Naive thymus-derived CD4-positive, alpha-beta T cell (primary cell): ENCODE measurements at regions of chr2 and their contacts with region 1.

Region 1: DNA sequence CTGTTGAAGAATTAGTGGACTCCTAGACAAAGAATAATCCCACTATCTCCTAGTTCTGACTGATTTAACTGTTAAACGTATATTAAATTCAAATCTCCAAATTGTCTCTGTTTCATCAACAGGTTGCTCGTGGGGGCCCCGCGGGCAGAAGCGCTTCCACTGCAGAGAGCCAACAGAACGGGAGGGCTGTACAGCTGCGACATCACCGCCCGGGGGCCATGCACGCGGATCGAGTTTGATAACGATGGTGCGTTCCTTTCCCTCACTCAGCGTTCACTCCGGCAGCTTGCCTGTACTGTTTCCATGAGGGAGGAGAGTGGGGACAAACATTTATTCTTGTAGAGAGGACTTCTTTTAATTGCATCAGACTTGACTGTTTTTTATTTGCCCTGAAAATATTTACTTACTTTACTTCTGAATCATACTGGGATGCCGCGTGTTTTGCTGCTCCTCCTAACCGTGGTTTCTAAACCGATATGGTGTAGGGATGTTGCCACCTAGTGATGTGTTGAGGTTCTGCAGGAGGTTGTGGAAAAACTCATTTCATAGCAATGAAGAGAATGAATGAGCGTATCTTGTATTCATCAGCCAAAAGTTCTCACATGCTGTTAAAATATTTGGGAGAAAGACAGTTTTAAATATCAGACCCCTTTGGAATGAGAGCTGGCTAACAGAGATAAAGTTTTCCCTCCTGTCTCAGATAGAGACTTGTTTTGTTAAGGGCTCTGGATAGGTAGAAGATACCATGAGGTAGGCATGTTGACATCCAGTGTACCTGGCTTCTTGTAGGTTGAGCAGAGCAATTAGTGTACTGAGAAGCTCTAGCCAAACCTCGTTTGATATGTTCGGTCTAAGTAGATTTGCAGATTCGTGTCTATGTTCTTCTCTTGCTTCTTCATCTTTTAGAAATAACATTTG is 38.3 kb downstream of the ITGA6 start:
- DNase-seq: peak in 8 of 9 donors; percentile 58 to 83 (median 76)
- ATAC-seq: peak; percentile 65
- H3K4me3 ChIP-seq: peak overlapping the region; percentile 68
- H3K4me3 Mint-ChIP-seq: peak overlapping the region; percentile 21 to 93 (median 84)
- H3K27ac ChIP-seq: peak overlapping the region; percentile 69
- H3K27ac Mint-ChIP-seq: peak overlapping the region; percentile 34 to 98 (median 91)
- H3K4me1 ChIP-seq: peaks cover 50 to 54% of the 10 kb centered on the region in 2 donors
- H3K4me1 Mint-ChIP-seq: peaks cover 54 to 97% (median 84%) of the 10 kb centered on the region in 7 donors
- H3K27me3 ChIP-seq: no peaks in the 10 kb centered on the region
- H3K27me3 Mint-ChIP-seq: peaks cover 0 to 2% (median 0%) of the 10 kb centered on the region in 5 donors

Region 2: DNA sequence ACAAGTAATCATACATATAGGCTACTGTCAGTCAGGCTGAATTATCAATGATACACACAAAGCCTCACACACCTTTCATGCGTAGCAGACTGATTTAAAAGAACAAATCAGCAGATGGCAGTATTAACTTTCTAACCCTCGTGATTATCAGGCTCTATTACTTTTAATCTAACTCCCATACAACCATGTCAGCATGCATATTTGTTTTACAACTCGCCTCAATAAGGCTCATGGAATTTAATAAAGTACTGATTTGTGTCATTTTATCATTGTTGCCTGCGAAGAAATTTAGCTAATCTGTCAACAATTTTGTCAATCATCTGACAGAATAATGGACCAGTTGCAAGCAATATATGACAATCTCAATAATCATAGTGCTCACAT is 654.4 kb before region 1 on chr2:
- CTCF ChIA-PET with region 1: interaction called, 3 read pairs
- POLR2A ChIA-PET with region 1: no interaction called
- intact Hi-C with region 1: loop called (anchors 1 kb)
- DNase-seq: peak in 4 of 9 donors; percentile 3 to 28 (median 14)
- ATAC-seq: no peak
- H3K4me3 ChIP-seq: no peak overlapping the region
- H3K4me3 Mint-ChIP-seq: no peak overlapping the region
- H3K27ac ChIP-seq: no peak overlapping the region
- H3K27ac Mint-ChIP-seq: no peak overlapping the region
- H3K4me1 ChIP-seq: no peaks in the 10 kb centered on the region
- H3K4me1 Mint-ChIP-seq: no peaks in the 10 kb centered on the region
- H3K27me3 ChIP-seq: no peaks in the 10 kb centered on the region
- H3K27me3 Mint-ChIP-seq: no peaks in the 10 kb centered on the region

Region 3: GRCh38 chr2:172102391-172103278 is 363.0 kb before region 1 on chr2 and contains the start of gene DLX2:
- CTCF ChIA-PET with region 1: no interaction called
- POLR2A ChIA-PET with region 1: interaction called, 3 read pairs
- intact Hi-C with region 1: loop called (anchors 2 to 5 kb)
- DNase-seq: peak in 5 of 9 donors; percentile 23 to 43 (median 32)
- ATAC-seq: peak; percentile 61
- H3K4me3 ChIP-seq: peak within 1 kb of the TSS; percentile 32
- H3K4me3 Mint-ChIP-seq: peak within 1 kb of the TSS; percentile 74 to 88 (median 82)
- H3K27ac ChIP-seq: no peak within 1 kb of the TSS
- H3K27ac Mint-ChIP-seq: peak within 1 kb of the TSS in 8 of 9 donors; percentile 11 to 89 (median 80)
- H3K4me1 ChIP-seq: peaks cover 41 to 62% of the 10 kb centered on the region in 2 donors
- H3K4me1 Mint-ChIP-seq: peaks cover 29 to 59% (median 49%) of the 10 kb centered on the region in 7 donors
- H3K27me3 ChIP-seq: peaks cover 48 to 83% of the 10 kb centered on the region in 2 donors
- H3K27me3 Mint-ChIP-seq: peaks cover 65 to 91% (median 70%) of the 10 kb centered on the region in 5 donors
- total RNA-seq, gene DLX2: 0.16 to 0.34 TPM in 2 of 5 experiments, not detected in the others

Region 4: GRCh38 chr2:172226244-172227061 is 239.2 kb before region 1 on chr2:
- CTCF ChIA-PET with region 1: interaction called, 30 read pairs
- POLR2A ChIA-PET with region 1: interaction called, 3 read pairs
- intact Hi-C with region 1: loop called (anchors 1 to 2 kb)
- DNase-seq: peak in 7 of 9 donors; percentile 32 to 51 (median 37)
- ATAC-seq: peak; percentile 78
- H3K4me3 ChIP-seq: no peak overlapping the region
- H3K4me3 Mint-ChIP-seq: no peak overlapping the region
- H3K27ac ChIP-seq: no peak overlapping the region
- H3K27ac Mint-ChIP-seq: peak overlapping the region in 4 of 9 donors; percentile 2 to 44 (median 36)
- H3K4me1 ChIP-seq: peaks cover 0 to 45% of the 10 kb centered on the region in 2 donors
- H3K4me1 Mint-ChIP-seq: peaks cover 42 to 71% (median 64%) of the 10 kb centered on the region in 7 donors
- H3K27me3 ChIP-seq: no peaks in the 10 kb centered on the region
- H3K27me3 Mint-ChIP-seq: peaks cover 0 to 6% (median 0%) of the 10 kb centered on the region in 5 donors

Region 5: GRCh38 chr2:172442072-172442895 is 23.4 kb before region 1 on chr2:
- CTCF ChIA-PET with region 1: interaction called, 673 read pairs
- POLR2A ChIA-PET with region 1: interaction called, 862 read pairs
- intact Hi-C with region 1: loop called in 1 of 2 experiments (anchors 1 kb)
- DNase-seq: peak in 3 of 9 donors; percentile 42 to 63 (median 46)
- ATAC-seq: peak; percentile 47
- H3K4me3 ChIP-seq: peak overlapping the region; percentile 46
- H3K4me3 Mint-ChIP-seq: peak overlapping the region in 9 of 10 donors; percentile 59 to 95 (median 91)
- H3K27ac ChIP-seq: peak overlapping the region; percentile 41
- H3K27ac Mint-ChIP-seq: peak overlapping the region in 8 of 9 donors; percentile 37 to 97 (median 90)
- H3K4me1 ChIP-seq: peaks cover 59 to 80% of the 10 kb centered on the region in 2 donors
- H3K4me1 Mint-ChIP-seq: peaks cover 33 to 79% (median 72%) of the 10 kb centered on the region in 7 donors
- H3K27me3 ChIP-seq: no peaks in the 10 kb centered on the region
- H3K27me3 Mint-ChIP-seq: peaks cover 0 to 31% (median 0%) of the 10 kb centered on the region in 5 donors

Region 6: DNA sequence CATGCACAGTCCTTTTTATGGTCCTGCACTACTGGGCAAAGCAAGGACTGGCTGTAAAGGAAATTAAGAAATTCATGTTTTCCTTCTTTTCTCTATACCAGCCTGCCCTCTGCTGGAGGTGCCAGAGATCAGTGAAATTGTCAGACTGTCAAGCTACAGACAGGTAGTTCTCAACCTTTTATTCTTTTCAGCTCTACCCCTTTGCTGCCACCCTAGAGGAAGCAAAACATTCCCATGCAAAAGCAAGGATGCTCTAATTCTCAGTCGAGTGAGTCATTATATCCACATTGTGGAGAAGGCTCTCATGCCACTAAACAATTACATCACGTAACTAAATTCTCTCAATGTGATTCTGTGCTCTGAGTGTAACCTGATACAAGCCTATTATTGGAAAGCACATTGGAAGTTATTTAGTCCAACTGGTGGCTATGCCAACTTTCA is 244.9 kb after region 1 on chr2:
- CTCF ChIA-PET with region 1: interaction called, 3 read pairs
- POLR2A ChIA-PET with region 1: no interaction called
- intact Hi-C with region 1: loop called (anchors 1 to 10 kb)
- DNase-seq: peak in 7 of 9 donors; percentile 16 to 51 (median 46)
- ATAC-seq: peak; percentile 61
- H3K4me3 ChIP-seq: no peak overlapping the region
- H3K4me3 Mint-ChIP-seq: no peak overlapping the region
- H3K27ac ChIP-seq: no peak overlapping the region
- H3K27ac Mint-ChIP-seq: no peak overlapping the region
- H3K4me1 ChIP-seq: no peaks in the 10 kb centered on the region
- H3K4me1 Mint-ChIP-seq: no peaks in the 10 kb centered on the region
- H3K27me3 ChIP-seq: no peaks in the 10 kb centered on the region
- H3K27me3 Mint-ChIP-seq: peaks cover 0 to 25% (median 4%) of the 10 kb centered on the region in 5 donors

Region 7: DNA sequence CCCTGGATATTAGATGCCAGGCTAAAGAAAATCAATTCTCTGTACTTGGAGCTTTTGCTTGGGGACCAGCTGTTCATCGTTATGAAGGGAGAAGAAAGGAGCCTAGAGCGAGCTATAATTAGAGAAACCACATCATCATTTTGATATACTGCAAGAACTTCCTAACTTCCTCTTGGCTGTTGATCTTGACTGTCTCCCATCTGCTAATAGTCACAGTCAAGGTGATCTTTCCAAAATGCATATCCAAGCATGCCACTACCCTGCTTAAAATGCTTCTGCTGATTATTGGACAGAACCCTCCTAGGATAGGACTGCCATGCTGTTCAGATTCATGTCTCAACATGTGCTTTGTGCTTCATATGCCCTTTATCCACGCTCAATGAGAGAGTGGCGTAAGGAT is 324.7 kb after region 1 on chr2:
- CTCF ChIA-PET with region 1: no interaction called
- POLR2A ChIA-PET with region 1: no interaction called
- intact Hi-C with region 1: no loop called
- DNase-seq: no peak
- ATAC-seq: no peak
- H3K4me3 ChIP-seq: no peak overlapping the region
- H3K4me3 Mint-ChIP-seq: no peak overlapping the region
- H3K27ac ChIP-seq: no peak overlapping the region
- H3K27ac Mint-ChIP-seq: no peak overlapping the region
- H3K4me1 ChIP-seq: no peaks in the 10 kb centered on the region
- H3K4me1 Mint-ChIP-seq: no peaks in the 10 kb centered on the region
- H3K27me3 ChIP-seq: no peaks in the 10 kb centered on the region
- H3K27me3 Mint-ChIP-seq: peaks cover 0 to 12% (median 12%) of the 10 kb centered on the region in 5 donors